ENCODE measurements at regions of chr22 and their contacts with region 1.

Region 1: DNA sequence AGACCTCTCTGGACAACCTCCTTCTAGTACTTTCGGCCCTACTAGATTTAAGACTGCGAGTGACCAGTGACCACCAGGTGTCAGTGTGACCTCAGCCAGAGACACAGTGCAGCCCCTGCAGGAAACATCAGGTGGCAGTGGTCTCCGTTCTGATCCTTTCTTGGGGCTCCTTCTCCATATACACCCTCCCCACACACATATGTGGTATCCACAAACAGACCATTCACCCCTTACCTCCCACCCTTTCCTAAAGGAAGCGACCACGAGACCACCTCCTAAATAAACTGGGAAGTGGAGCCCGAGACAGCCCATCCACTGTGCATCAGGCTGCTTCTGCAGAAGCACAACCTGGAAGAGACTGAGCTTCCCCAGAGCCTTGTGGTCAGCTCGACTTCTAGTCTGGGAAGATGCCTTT is 38.5 kb upstream of the CYP2D6 start:
- DNase-seq: peak; percentile 85
- H3K4me3 Mint-ChIP-seq: no peak overlapping the region
- H3K27ac Mint-ChIP-seq: no peak overlapping the region
- H3K4me1 Mint-ChIP-seq: peaks cover 20% of the 10 kb centered on the region
- H3K27me3 Mint-ChIP-seq: no peaks in the 10 kb centered on the region
- CTCF ChIP-seq: peak; percentile 97

Region 2: DNA sequence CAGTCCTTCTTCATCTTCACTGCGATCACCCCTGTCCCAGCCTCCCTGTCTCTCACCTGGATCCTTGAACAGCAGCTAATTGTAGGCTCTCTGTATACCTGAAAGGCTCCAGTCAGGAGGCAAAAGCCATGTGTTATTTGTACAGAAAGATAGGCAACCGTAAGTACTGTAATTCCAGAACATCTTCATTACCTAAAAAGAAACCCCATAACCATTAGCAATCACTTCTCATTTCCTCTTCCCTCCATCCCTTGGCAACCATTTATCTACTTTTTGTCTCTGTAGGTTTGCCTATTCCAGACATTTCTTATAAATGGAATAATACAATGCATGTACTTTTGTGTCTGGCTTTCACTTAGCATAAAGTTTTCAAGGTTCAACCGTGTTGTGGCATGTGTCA is 116.3 kb before region 1 on chr22:
- CTCF ChIA-PET with region 1: no interaction called
- intact Hi-C with region 1: no loop called
- DNase-seq: no peak
- H3K4me3 Mint-ChIP-seq: no peak overlapping the region
- H3K27ac Mint-ChIP-seq: no peak overlapping the region
- H3K4me1 Mint-ChIP-seq: no peaks in the 10 kb centered on the region
- H3K27me3 Mint-ChIP-seq: no peaks in the 10 kb centered on the region
- CTCF ChIP-seq: no peak

Region 3: GRCh38 chr22:42444077-42444904 is 275.2 kb after region 1 on chr22:
- CTCF ChIA-PET with region 1: interaction called, 4 read pairs
- intact Hi-C with region 1: loop called (anchors 1 kb)
- DNase-seq: peak; percentile 82
- H3K4me3 Mint-ChIP-seq: peak overlapping the region; percentile 61
- H3K27ac Mint-ChIP-seq: peak overlapping the region; percentile 27
- H3K4me1 Mint-ChIP-seq: peaks cover 27% of the 10 kb centered on the region
- H3K27me3 Mint-ChIP-seq: peaks cover 5% of the 10 kb centered on the region
- CTCF ChIP-seq: peak; percentile 77